ENCODE measurements at regions of chr5 and their contacts with region 1.

Region 1: DNA sequence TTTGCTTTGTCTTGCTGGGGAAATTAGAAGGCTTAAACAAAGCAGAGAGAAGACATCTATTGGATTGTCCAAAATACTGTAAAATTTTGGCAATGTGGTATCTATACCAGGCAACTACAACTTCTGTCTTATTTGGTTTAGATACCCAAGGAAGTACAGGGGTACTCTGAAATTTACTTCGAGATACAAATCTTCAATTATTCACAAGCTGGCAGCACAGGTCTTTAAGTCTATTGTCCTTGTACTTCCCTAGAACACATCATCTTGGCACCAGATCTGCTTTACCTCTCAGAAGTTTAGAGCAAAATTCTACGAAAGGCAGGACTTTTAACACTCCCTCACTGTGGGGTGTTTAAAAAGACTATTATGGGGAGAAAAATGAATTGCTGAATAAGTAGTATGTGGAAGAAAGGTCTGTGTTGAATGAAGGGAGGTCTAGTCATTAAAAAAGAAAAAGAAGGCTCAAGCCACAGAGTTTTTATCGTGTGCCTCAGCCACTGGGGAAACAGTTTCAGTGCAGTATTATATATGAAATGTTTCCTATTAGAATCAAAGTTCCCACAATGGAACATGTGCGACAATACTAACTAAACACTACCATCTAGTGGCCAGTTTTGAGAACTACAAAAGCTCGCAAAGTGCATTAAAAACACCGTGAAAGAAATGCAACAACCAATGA is 93.7 kb downstream of the PDE4D start:
- DNase-seq: no peak
- ATAC-seq: peak; percentile 85

Region 2: GRCh38 chr5:59390074-59390659 is 409.6 kb before region 1 on chr5:
- intact Hi-C with region 1: loop called (anchors 5 kb)
- DNase-seq: no peak
- ATAC-seq: no peak

Region 3: GRCh38 chr5:59506285-59506877 is 293.4 kb before region 1 on chr5:
- intact Hi-C with region 1: loop called (anchors 10 kb)
- DNase-seq: no peak
- ATAC-seq: no peak

Region 4: GRCh38 chr5:59673438-59674058 is 126.3 kb before region 1 on chr5:
- intact Hi-C with region 1: loop called (anchors 5 kb)
- DNase-seq: no peak
- ATAC-seq: no peak

Measured in Right ventricle myocardium superior (tissue), 1 donor.